AG04449 (cell line): ENCODE measurements at regions of chr2 and their contacts with region 1.

Region 1: DNA sequence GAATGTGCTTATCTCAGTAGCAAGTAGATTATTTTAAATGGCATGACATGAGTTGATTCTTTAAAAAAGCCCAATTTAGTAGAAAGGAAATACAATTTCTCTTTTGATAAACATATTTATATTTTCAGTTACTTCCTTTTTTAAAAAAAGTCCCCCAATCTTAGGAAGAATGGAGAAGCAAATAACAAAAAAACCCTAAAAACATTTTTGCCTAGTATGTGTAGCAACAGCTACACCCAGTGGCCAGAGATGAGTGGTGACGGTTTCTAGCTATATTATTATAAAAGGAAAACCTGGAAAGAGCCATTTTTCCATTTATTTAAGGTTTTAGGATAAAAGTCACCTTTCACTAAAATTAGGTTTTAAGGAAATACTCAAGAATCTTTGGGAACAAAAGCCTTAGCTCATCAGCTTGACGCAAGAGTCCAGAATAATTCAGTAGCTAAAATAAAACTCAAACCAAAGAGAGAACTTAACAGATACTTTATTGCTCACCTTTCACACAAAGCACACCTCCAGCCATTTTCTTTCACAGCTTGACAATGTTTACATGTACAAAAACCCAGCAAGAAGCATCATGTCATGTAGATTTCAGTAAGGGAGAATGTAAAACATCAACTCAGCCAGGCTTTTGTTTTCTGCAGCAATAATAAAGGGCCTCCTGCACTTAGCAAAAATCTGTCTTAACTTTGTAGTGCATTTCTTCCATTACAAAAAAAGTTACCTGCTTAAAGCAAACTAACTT is 15.7 kb downstream of the FAM98A start:
- DNase-seq: no peak
- H3K4me3 ChIP-seq: no peak overlapping the region
- CTCF ChIP-seq: peak; percentile 55

Region 2: GRCh38 chr2:33406622-33407021 is 176.7 kb before region 1 on chr2:
- CTCF ChIA-PET with region 1: interaction called, 33 read pairs
- POLR2A ChIA-PET with region 1: no interaction called
- DNase-seq: no peak
- H3K4me3 ChIP-seq: no peak overlapping the region
- CTCF ChIP-seq: no peak

Region 3: GRCh38 chr2:33419581-33420200 is 163.7 kb before region 1 on chr2:
- CTCF ChIA-PET with region 1: interaction called, 13 read pairs
- POLR2A ChIA-PET with region 1: no interaction called
- DNase-seq: no peak
- H3K4me3 ChIP-seq: no peak overlapping the region
- CTCF ChIP-seq: no peak

Region 4: GRCh38 chr2:33441235-33441810 is 142.0 kb before region 1 on chr2:
- CTCF ChIA-PET with region 1: interaction called, 40 read pairs
- POLR2A ChIA-PET with region 1: no interaction called
- DNase-seq: no peak
- H3K4me3 ChIP-seq: no peak overlapping the region
- CTCF ChIP-seq: peak; percentile 80

Region 5: DNA sequence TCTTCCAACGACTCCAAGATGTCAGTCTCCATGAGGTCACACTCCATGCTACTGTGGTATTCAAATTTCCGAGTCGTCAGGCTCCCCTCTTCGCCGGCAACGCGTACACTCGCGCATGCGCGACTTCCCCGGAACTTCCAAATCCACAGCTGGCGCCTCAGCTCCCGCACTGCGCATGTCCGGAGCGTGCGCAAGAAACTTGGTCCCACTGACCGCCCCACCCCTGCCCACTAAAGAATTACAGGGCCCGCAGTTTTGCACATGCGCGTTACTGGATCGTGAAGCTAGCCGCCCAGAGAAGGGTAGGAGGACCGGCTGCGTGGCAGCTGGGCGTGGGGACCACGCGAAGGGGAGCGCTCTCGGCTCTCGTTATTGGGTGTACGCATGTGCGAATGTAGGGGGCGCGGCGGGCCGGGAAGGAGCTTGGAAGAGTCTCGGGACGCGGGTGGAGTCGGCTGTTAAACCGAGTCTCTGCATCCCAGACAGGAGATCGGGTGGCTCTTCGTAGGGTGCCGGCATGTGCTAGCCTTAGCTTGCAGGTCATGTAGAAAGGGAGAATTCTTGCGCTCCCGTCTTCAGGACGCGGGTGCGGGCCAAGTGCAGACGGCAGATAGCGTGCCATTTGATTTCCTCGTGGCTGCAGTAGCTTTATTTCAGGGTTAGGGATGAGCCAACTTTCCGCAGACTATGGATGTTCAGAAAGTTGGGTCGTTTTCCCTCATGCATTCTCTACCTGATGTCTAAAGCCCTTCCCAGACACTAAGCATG is 16.0 kb after region 1 on chr2 and contains the start of gene FAM98A:
- CTCF ChIA-PET with region 1: interaction called, 21 read pairs
- POLR2A ChIA-PET with region 1: interaction called, 4 read pairs
- DNase-seq: peak; percentile 94
- H3K4me3 ChIP-seq: peak within 1 kb of the TSS; percentile 94
- CTCF ChIP-seq: no peak